AG04450 (cell line): ENCODE measurements at regions of chr19 and their contacts with region 1.

Region 1: DNA sequence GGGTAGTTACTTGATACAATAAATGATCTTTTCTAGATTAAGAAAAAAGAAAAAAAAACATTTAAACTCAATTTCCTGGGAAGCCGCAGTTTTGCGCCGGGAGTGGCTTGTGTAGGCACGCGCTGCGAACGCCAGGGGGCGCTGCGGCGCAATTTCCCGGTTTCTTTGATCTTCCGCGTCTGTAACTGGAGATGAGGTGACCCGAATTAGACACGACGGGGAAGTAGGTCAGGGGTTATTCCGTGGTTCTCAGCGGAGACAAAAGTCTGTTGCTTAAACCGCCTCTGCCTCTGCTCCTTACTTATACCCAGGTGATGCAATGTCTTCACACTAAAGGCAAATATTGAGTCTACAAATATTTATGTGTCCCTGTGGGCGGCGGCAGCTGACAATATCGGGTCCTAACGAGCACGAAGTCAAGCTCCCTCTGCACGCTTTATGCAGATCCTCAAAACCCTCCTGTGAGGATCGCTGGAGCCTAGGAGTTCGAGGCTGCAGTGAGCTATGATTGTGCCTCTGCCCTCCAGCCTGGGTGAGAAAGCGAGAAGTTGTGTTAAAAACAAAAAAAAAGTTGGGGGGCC is 15.2 kb downstream of the STXBP2 start:
- DNase-seq: peak; percentile 16
- H3K4me3 ChIP-seq: peak overlapping the region; percentile 43
- H3K27ac ChIP-seq: no peak overlapping the region
- H3K27me3 ChIP-seq: peaks cover 2% of the 10 kb centered on the region
- CTCF ChIP-seq: peak; percentile 98

Region 2: GRCh38 chr19:7665076-7665475 is 12.9 kb after region 1 on chr19:
- CTCF ChIA-PET with region 1: interaction called, 17 read pairs
- POLR2A ChIA-PET with region 1: no interaction called
- DNase-seq: peak; percentile 46
- H3K4me3 ChIP-seq: no peak overlapping the region
- H3K27ac ChIP-seq: no peak overlapping the region
- H3K27me3 ChIP-seq: peaks cover 9% of the 10 kb centered on the region
- CTCF ChIP-seq: no peak

Region 3: GRCh38 chr19:7674010-7675005 is 22.2 kb after region 1 on chr19:
- CTCF ChIA-PET with region 1: interaction called, 16 read pairs
- POLR2A ChIA-PET with region 1: no interaction called
- DNase-seq: no peak
- H3K4me3 ChIP-seq: no peak overlapping the region
- H3K27ac ChIP-seq: no peak overlapping the region
- H3K27me3 ChIP-seq: peaks cover 14% of the 10 kb centered on the region
- CTCF ChIP-seq: no peak

Region 4: DNA sequence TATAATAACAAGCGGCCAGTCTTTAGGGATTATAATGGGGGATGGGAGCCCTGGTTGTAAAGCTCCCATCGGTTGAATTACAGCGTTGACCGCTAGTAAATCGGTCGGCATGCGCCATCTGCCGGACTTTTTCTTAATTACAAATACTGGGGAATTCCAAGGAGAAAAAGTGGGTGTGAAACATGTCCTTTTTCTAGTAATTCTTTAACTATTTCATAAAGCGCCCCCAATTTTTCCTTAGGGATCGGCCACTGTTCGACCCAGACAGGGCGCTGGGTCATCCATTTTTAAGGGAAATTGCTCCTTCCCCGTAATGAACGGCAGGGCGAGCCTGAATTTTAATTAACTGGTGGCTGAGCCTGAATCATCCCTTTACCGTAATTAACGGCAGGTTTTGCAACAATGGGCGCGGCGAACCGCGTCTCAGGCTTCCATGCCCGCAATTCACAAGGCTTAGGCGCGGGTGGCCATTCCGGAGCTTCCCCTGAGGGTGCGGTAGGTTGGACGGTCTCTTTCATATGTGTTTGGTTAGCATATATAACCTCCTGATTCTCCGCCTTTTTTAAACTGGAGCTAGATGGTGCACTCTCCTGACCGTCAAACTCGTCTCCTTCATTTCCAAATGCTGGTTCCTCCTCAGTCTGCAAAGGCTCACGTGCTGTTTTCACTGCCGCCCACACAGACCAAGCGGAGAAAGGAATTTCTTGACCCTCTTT is 147.6 kb after region 1 on chr19:
- CTCF ChIA-PET with region 1: interaction called, 51 read pairs
- POLR2A ChIA-PET with region 1: interaction called, 8 read pairs
- DNase-seq: peak; percentile 55
- H3K4me3 ChIP-seq: peak overlapping the region; percentile 51
- H3K27ac ChIP-seq: no peak overlapping the region
- H3K27me3 ChIP-seq: peaks cover 2% of the 10 kb centered on the region
- CTCF ChIP-seq: peak; percentile 62